ENCODE measurements at regions of chr2 and their contacts with region 1.

Region 1: DNA sequence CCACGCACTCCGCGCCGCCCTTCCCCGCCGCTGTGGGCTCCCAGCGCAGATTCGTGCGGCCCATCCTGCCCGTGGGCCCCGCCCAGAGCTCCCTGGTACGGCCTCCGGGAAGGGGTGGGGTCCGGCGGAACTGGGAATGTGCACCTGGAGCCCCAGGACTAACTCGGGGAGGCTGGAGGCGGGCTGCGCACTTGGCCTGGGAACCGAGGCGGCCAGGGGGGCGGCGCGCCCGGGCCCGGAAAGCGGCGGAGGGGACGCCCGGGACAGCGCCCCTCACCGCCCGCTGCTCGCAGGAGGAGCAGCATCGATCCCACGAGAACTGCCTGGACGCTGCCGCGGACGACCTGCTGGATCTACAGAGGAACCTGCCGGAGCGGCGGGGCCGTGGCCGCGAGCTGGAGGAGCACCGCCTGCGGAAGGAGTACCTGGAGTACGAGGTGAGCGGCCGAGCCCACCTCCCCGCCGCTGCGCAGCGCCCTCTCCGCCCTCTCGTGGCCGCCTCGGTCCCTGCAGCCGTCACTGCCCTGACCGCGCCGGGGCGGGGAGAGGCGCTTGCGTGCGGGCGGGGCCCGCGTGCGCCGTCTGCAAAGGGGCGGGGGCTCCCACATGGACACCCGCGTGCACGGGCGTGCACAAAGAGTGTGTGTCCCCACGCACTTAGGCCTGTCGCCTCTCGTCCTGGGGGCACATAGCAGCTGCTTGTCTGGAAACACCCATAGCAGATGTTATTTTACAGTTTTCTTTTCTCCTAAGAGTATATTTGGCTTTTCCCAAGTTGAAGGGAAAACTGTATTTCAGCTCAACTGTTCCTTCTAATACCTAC is 25.2 kb downstream of the PSD4 start:
- DNase-seq: peak; percentile 89
- ATAC-seq: peak; percentile 82
- H3K4me3 Mint-ChIP-seq: peak overlapping the region; percentile 65
- H3K27ac Mint-ChIP-seq: no peak overlapping the region
- H3K4me1 Mint-ChIP-seq: peaks cover under 1% of the 10 kb centered on the region; the same call in 1 of the 2 replicates
- H3K27me3 Mint-ChIP-seq: peaks cover 22% of the 10 kb centered on the region
- CTCF ChIP-seq: peak; percentile 79

Region 2: DNA sequence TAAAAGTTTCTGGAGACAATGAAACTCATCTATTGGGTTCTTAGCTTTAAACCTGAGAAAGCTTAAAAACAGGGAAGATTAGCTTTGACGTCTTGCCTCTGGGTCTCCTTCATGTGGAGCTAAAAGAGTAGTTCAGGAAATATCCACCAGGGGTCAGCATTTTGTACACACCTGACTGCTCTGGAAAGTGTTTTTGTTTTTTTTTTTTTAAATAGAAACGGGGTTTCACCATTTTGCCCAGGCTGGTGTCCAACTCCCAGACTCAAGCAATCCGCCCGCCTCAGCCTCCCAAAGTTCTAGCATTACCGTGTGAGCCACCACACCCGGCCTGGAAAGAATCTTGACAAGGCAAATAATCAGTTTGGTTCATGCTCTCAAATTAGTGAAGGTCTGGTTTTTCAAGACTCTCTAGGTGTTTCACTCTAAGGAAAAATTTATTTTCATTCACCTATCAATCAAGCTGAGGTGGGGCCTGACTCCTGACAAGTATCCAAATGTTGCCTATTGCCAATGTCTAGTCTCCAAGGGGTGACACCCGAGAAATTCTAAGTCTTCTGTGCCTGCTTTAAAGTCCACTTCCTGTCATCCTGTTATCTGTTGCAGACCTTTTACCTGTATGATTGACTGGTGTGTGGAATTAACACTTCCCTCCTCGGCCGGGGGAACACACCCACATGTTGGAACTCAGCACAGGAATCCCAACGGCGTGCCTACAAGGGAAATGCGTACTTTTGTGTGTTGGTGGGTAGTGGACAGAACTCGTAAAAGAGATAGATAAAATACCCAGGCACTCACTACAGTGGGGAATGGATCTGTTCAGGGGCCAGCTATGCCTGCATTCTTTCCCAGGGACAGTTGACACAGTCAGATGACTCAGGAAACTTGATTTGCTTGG is 60.3 kb before region 1 on chr2:
- CTCF ChIA-PET with region 1: interaction called, 155 read pairs
- POLR2A ChIA-PET with region 1: interaction called, 3 read pairs
- DNase-seq: no peak
- ATAC-seq: peak; percentile 65
- H3K4me3 Mint-ChIP-seq: no peak overlapping the region
- H3K27ac Mint-ChIP-seq: no peak overlapping the region
- H3K4me1 Mint-ChIP-seq: no peaks in the 10 kb centered on the region
- H3K27me3 Mint-ChIP-seq: no peaks in the 10 kb centered on the region
- CTCF ChIP-seq: peak; percentile 68

Region 3: GRCh38 chr2:113173542-113174395 is 25.2 kb before region 1 on chr2 and contains the start of gene PSD4:
- CTCF ChIA-PET with region 1: interaction called, 15 read pairs
- POLR2A ChIA-PET with region 1: no interaction called
- DNase-seq: no peak
- ATAC-seq: peak; percentile 54
- H3K4me3 Mint-ChIP-seq: no peak within 1 kb of the TSS
- H3K27ac Mint-ChIP-seq: no peak within 1 kb of the TSS
- H3K4me1 Mint-ChIP-seq: peaks cover 21% of the 10 kb centered on the region
- H3K27me3 Mint-ChIP-seq: no peaks in the 10 kb centered on the region; the same call in 1 of the 2 replicates
- CTCF ChIP-seq: no peak
- total RNA-seq, gene PSD4: 1.5 to 2.7 TPM (median 2.3 TPM) in 3 replicates

Region 4: DNA sequence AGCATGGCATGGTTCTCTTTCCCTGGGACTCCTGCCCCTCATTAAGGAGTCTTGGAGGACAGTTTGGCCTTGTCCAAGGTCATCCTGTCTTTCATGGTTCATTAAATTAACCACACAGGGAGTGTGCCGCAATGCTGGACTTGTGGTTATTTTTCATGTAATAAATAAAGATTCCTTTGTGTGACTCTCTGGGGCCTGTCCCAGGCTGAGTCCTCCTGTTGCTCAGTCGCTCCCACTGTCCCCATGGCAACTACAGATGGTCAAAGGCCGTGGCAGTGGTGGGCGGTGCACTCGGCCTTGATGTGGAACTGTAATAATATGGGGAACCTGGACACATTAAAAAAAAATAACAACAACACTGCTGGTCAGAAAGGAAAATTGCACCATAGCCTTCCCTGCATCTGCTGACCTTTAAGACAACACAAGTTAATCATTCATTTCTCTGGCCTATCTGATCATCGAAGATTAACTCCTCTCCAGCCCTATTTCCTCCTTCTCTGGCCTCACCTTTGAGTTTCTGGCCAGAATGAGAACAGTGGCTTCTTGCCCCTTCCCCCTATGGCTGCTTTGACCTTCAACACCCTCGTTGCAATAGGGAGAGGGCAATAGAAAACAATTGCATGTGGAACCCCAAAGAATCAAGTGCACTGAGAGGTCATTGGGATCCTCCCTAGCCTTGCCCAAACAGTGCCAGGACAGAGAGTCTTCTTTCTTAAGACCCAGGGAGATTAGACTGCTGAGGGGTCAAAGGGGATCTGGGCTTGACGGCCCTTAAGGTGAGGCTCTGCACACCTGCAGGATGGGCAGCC is 19.5 kb after region 1 on chr2:
- CTCF ChIA-PET with region 1: interaction called, 37 read pairs
- POLR2A ChIA-PET with region 1: no interaction called
- DNase-seq: no peak
- ATAC-seq: no peak
- H3K4me3 Mint-ChIP-seq: no peak overlapping the region
- H3K27ac Mint-ChIP-seq: no peak overlapping the region
- H3K4me1 Mint-ChIP-seq: peaks cover 35% of the 10 kb centered on the region
- H3K27me3 Mint-ChIP-seq: 0 out of 2 replicates have a peak, but pooled peaks cover 2% of the 10 kb centered on the region
- CTCF ChIP-seq: no peak

Region 5: DNA sequence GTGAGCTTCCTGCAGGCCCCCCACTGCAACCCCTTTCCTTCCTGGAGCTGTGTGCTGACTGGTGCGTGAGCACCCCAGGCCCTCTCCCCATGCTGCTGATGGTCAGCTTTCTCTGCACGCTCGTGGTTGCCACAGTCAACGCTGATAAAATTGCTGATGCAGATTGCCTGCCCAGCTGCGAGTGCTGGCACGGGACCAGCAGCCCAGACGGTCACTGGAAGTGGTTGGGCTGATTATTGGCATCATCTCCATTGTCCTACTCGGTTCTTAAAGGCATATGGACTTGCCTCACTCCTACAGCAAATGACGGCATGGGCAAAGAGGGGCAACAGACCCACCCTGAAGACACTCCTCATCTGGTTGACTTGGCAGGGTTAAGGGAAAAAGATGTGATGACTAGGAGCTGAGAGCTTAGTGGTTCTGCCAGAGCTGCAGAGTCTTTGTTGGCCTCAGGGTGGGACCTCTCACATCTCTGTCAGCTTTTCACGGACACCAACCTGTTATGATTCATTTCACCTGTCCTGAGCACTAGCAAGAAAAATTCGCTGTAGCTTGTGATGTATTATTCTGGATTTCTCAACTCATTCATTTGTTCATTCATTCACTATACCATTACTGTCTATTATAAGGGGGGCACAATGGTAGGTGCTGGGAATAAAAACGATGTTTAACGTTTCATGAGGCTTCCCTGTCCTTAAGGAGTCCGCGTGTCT is 41.3 kb after region 1 on chr2:
- CTCF ChIA-PET with region 1: interaction called, 19 read pairs
- POLR2A ChIA-PET with region 1: no interaction called
- DNase-seq: no peak
- ATAC-seq: no peak
- H3K4me3 Mint-ChIP-seq: no peak overlapping the region
- H3K27ac Mint-ChIP-seq: no peak overlapping the region
- H3K4me1 Mint-ChIP-seq: peaks cover 4% of the 10 kb centered on the region
- H3K27me3 Mint-ChIP-seq: no peaks in the 10 kb centered on the region
- CTCF ChIP-seq: no peak

Region 6: DNA sequence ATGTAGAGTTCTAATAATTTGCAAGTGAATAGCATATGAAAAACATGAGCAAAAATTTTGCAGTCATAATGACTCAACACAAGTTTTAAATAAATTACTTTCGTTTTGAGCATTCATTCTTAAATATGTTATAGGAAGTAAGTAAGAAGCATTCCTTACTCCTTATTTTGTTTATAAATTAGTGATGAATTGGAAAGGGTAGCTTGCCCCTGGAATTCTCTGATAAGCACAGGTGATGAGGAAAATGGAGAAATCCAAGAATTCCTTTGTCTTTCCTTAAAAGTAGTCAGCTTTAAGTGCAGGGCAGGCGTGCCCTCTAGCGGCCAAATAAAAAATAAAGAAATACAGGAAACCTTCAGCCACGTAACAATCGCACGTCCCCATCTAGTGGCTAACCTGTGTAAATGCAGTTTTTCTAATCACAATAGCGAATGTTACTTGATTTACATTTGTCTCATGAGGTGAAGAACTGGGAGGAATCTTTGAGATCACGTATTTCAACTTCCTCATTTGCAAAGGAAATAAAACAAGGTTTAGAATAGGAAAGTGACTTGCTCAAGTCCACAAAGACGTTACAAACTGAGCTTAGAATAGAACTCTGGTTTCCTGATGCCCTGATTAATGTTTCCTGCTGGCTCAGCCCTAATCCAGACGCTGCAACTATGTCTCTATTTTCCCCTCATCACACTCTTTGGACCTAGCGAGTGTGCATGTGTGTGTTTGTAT is 191.3 kb after region 1 on chr2:
- CTCF ChIA-PET with region 1: interaction called, 33 read pairs
- POLR2A ChIA-PET with region 1: no interaction called
- DNase-seq: peak; percentile 46
- ATAC-seq: peak; percentile 55
- H3K4me3 Mint-ChIP-seq: no peak overlapping the region
- H3K27ac Mint-ChIP-seq: no peak overlapping the region
- H3K4me1 Mint-ChIP-seq: 0 out of 2 replicates have a peak, but pooled peaks cover 3% of the 10 kb centered on the region
- H3K27me3 Mint-ChIP-seq: peaks cover 6% of the 10 kb centered on the region; the same call in 1 of the 2 replicates
- CTCF ChIP-seq: peak; percentile 75